T-cell (primary cell): ENCODE measurements at regions of chr1 and their contacts with region 1.

Region 1: GRCh38 chr1:160837558-160838205 is 25.0 kb downstream of the CD244 start:
- DNase-seq: peak; percentile 72 to 93 (median 88)
- ATAC-seq: peak; percentile 98 to 99 (median 98)
- H3K4me3 ChIP-seq: peak overlapping the region; percentile 9 to 19
- H3K4me3 Mint-ChIP-seq: peak overlapping the region in 2 of 3 donors; percentile 28 to 72
- H3K27ac ChIP-seq: peak overlapping the region; percentile 88
- H3K27ac Mint-ChIP-seq: peak overlapping the region; percentile 94 to 96
- H3K4me1 ChIP-seq: peaks cover 51 to 74% of the 10 kb centered on the region in 2 experiments
- H3K4me1 Mint-ChIP-seq: peaks cover 71 to 81% (median 72%) of the 10 kb centered on the region in 3 donors
- H3K27me3 ChIP-seq: no peaks in the 10 kb centered on the region
- H3K27me3 Mint-ChIP-seq: no peaks in the 10 kb centered on the region

Region 2: GRCh38 chr1:160795951-160796383 is 41.7 kb before region 1 on chr1 and contains the start of gene LY9:
- CTCF ChIA-PET with region 1: interaction called, 4 to 12 read pairs
- POLR2A ChIA-PET with region 1: no interaction called
- DNase-seq: peak; percentile 45 to 95 (median 84)
- ATAC-seq: peak; percentile 86 to 90 (median 87)
- H3K4me3 ChIP-seq: peak within 1 kb of the TSS; percentile 72 to 92
- H3K4me3 Mint-ChIP-seq: peak within 1 kb of the TSS; percentile 93 to 99 (median 98)
- H3K27ac ChIP-seq: peak within 1 kb of the TSS; percentile 93
- H3K27ac Mint-ChIP-seq: peak within 1 kb of the TSS; percentile 99
- H3K4me1 ChIP-seq: peaks cover 33 to 37% of the 10 kb centered on the region in 2 experiments
- H3K4me1 Mint-ChIP-seq: peaks cover 45 to 66% (median 61%) of the 10 kb centered on the region in 3 donors
- H3K27me3 ChIP-seq: no peaks in the 10 kb centered on the region
- H3K27me3 Mint-ChIP-seq: no peaks in the 10 kb centered on the region
- total RNA-seq, gene LY9: 95.4 to 127 (median 101) TPM

Region 3: GRCh38 chr1:160877221-160877620 is 39.5 kb after region 1 on chr1:
- CTCF ChIA-PET with region 1: interaction called, 6 to 13 read pairs
- POLR2A ChIA-PET with region 1: interaction called in 1 of 2 experiments, 3 read pairs
- DNase-seq: peak in 11 of 35 experiments; percentile 6 to 70 (median 20)
- ATAC-seq: peak; percentile 69 to 81 (median 74)
- H3K4me3 ChIP-seq: no peak overlapping the region
- H3K4me3 Mint-ChIP-seq: no peak overlapping the region
- H3K27ac ChIP-seq: no peak overlapping the region
- H3K27ac Mint-ChIP-seq: peak overlapping the region; percentile 19 to 66
- H3K4me1 ChIP-seq: peaks cover 2 to 21% of the 10 kb centered on the region in 2 experiments
- H3K4me1 Mint-ChIP-seq: peaks cover 21 to 27% (median 27%) of the 10 kb centered on the region in 3 donors
- H3K27me3 ChIP-seq: no peaks in the 10 kb centered on the region
- H3K27me3 Mint-ChIP-seq: no peaks in the 10 kb centered on the region

Region 4: DNA sequence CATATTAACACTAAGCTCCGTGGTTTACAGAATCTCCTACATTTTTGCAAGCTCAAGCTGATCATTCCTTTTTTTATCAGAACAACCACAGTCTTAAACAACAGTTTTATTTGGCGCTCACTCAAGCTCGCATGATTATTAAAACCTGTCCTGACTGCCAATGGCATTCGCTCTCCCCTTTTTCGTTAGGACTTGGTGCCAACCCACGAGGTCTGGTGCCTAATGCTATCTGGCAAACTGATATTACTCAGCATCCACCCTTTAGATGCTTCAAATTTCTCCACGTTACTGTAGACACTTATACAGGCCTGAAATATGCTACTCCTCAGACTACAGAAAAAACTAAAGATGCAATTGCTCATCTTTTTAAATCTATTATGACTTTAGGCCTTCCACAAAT is 70.3 kb after region 1 on chr1:
- CTCF ChIA-PET with region 1: no interaction called
- POLR2A ChIA-PET with region 1: no interaction called
- DNase-seq: no peak
- ATAC-seq: no peak
- H3K4me3 ChIP-seq: no peak overlapping the region
- H3K4me3 Mint-ChIP-seq: no peak overlapping the region
- H3K27ac ChIP-seq: no peak overlapping the region
- H3K27ac Mint-ChIP-seq: no peak overlapping the region
- H3K4me1 ChIP-seq: no peaks in the 10 kb centered on the region
- H3K4me1 Mint-ChIP-seq: no peaks in the 10 kb centered on the region
- H3K27me3 ChIP-seq: no peaks in the 10 kb centered on the region
- H3K27me3 Mint-ChIP-seq: no peaks in the 10 kb centered on the region